Activated B cell treated with CpG ODN at 0.5 μM for 24 hours (primary cell): ENCODE measurements at regions of chr4 and their contacts with region 1.

Region 1: GRCh38 chr4:83284193-83285054 is at the start of gene COQ2:
- DNase-seq: peak; percentile 96
- ATAC-seq: peak; percentile 89
- H3K4me3 Mint-ChIP-seq: peak within 1 kb of the TSS; percentile 98
- H3K27ac Mint-ChIP-seq: peak within 1 kb of the TSS; percentile 99
- H3K4me1 Mint-ChIP-seq: peaks cover 35% of the 10 kb centered on the region
- H3K27me3 Mint-ChIP-seq: no peaks in the 10 kb centered on the region
- CTCF ChIP-seq: no peak
- total RNA-seq, gene COQ2: 15.2 and 18.8 TPM in 2 replicates

Region 2: DNA sequence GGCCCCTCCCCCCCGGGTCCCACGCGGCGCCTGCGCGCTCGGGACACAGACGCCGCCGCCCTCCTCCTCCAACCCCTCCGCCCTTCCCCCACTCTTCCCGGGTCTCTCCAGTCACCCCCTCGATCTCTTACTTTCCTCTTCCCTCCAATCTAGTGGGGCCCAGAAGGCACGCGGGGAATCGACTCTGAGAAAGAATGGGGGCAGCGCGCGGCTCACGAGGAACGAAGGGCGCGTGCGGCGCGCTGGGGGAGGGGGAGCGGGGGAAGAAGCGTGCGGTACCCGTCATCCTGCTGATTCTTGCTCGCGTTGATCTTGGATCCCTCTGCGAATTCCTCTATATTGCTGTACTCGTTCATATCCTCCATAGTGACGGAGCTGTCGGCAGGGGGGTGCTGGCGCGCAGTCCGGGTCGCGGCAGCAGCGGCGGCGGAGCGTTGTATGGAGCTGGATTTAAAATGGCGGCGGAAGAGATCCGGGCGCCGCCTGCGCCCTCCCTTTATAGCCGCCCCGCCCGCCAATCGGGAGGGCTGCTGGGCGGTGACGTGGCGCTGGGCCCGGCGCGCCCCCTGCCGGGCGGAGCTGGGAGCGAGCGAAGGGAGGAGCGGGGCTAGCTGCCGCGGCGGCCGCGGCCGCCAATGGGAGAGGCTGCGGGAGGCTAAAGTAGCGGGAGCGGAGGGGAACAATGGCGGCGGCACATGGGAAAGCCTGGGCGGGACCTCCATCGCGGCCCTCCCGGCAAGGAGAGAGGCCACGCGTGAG is 855.3 kb before region 1 on chr4:
- CTCF ChIA-PET with region 1: no interaction called
- POLR2A ChIA-PET with region 1: interaction called, 4 read pairs
- intact Hi-C with region 1: loop called (anchors 1 kb)
- DNase-seq: peak; percentile 97
- ATAC-seq: peak; percentile 59
- H3K4me3 Mint-ChIP-seq: peak overlapping the region; percentile 100
- H3K27ac Mint-ChIP-seq: peak overlapping the region; percentile 99
- H3K4me1 Mint-ChIP-seq: peaks cover 58% of the 10 kb centered on the region
- H3K27me3 Mint-ChIP-seq: no peaks in the 10 kb centered on the region
- CTCF ChIP-seq: peak; percentile 68

Region 3: GRCh38 chr4:82890901-82891706 is 393.3 kb before region 1 on chr4 and contains the start of gene SEC31A:
- CTCF ChIA-PET with region 1: no interaction called
- POLR2A ChIA-PET with region 1: interaction called, 4 read pairs
- intact Hi-C with region 1: loop called (anchors 1 kb)
- DNase-seq: peak; percentile 97
- ATAC-seq: peak; percentile 92
- H3K4me3 Mint-ChIP-seq: peak within 1 kb of the TSS; percentile 93
- H3K27ac Mint-ChIP-seq: peak within 1 kb of the TSS; percentile 94
- H3K4me1 Mint-ChIP-seq: peaks cover 34% of the 10 kb centered on the region
- H3K27me3 Mint-ChIP-seq: no peaks in the 10 kb centered on the region
- CTCF ChIP-seq: no peak
- total RNA-seq, gene SEC31A: 154 and 172 TPM in 2 replicates

Region 4: DNA sequence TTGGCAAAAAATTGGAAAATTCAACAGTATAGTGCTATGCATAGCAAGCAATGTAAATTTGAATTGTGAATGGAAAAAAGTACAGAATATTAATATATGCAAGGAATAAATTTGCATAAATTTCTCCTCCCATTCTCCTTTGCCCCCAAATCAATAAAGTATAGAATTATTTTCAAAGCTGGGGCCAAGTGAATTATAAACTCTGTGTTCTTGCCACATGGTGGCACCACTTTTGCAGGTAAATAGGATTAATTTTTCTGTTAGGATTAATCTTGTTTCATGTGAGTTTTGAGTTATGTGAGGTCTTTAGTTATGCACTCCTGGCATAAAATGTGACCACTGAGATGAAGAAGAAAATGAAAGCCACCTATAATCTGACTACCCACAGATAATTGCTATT is 229.5 kb before region 1 on chr4:
- CTCF ChIA-PET with region 1: interaction called, 61 read pairs
- POLR2A ChIA-PET with region 1: interaction called, 7 read pairs
- intact Hi-C with region 1: loop called (anchors 1 kb)
- DNase-seq: no peak
- ATAC-seq: no peak
- H3K4me3 Mint-ChIP-seq: no peak overlapping the region
- H3K27ac Mint-ChIP-seq: no peak overlapping the region
- H3K4me1 Mint-ChIP-seq: peaks cover 2% of the 10 kb centered on the region
- H3K27me3 Mint-ChIP-seq: no peaks in the 10 kb centered on the region
- CTCF ChIP-seq: no peak

Region 5: GRCh38 chr4:83217721-83218522 is 66.5 kb before region 1 on chr4:
- CTCF ChIA-PET with region 1: interaction called, 3 read pairs
- POLR2A ChIA-PET with region 1: interaction called, 6 read pairs
- intact Hi-C with region 1: loop called (anchors 1 kb)
- DNase-seq: peak; percentile 40
- ATAC-seq: peak; percentile 90
- H3K4me3 Mint-ChIP-seq: peak overlapping the region; percentile 76
- H3K27ac Mint-ChIP-seq: peak overlapping the region; percentile 91
- H3K4me1 Mint-ChIP-seq: peaks cover 91% of the 10 kb centered on the region
- H3K27me3 Mint-ChIP-seq: no peaks in the 10 kb centered on the region
- CTCF ChIP-seq: no peak

Region 6: DNA sequence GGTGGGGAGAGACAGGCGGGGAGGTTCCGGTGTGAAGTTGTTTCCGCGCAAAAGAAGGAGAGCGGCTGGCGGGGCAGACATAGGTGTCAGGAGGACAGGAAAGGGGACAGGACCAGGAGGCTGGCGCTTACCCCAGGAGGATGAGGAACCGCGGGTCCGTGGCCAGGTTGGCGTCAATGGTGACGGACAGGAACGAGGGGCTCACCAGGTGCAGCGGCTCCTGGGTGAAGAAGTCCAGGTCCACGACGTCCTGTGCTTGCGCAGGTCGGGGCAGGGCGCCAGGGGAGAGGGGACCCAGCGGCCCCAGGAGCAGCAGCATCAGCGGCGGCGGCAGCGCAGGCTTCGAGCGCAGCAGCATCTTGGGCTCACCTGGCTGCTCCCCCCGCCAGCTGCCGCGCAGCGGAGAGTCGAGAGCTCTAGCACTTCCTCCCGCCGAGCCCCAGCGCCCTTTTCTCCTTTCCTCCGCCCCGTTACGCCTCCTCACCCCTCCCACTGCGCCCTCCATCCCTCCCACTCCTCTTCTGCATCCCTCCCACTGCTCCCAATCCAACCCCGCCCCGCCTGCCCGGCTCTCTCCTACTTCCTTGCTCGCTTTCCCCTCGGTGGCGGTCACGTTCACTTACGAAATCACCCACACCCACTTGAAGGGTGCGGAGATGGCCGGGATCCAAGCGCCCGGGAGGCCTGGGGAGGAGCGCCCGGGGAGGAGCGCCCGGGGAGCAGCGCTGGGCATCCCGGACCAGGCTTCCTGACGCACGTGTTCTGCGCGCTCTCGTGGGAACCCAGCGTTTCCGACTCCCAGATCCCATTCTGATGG is 50.2 kb after region 1 on chr4 and contains the start of gene HPSE:
- CTCF ChIA-PET with region 1: no interaction called
- POLR2A ChIA-PET with region 1: interaction called, 4 read pairs
- intact Hi-C with region 1: loop called (anchors 2 kb)
- DNase-seq: peak; percentile 58
- ATAC-seq: peak; percentile 94
- H3K4me3 Mint-ChIP-seq: peak within 1 kb of the TSS; percentile 83
- H3K27ac Mint-ChIP-seq: peak within 1 kb of the TSS; percentile 59
- H3K4me1 Mint-ChIP-seq: peaks cover 8% of the 10 kb centered on the region
- H3K27me3 Mint-ChIP-seq: no peaks in the 10 kb centered on the region
- CTCF ChIP-seq: no peak
- total RNA-seq, gene HPSE: 1.5 TPM in 2 replicates